CD4-positive, alpha-beta T cell (primary cell): ENCODE measurements at regions of chr11 and their contacts with region 1.

Region 1: GRCh38 chr11:44936525-44936924 is 14.2 kb downstream of the TP53I11 start:
- DNase-seq: peak; percentile 66 to 90 (median 82)
- ATAC-seq: peak; percentile 90
- H3K4me3 ChIP-seq: no peak overlapping the region
- H3K4me3 Mint-ChIP-seq: no peak overlapping the region
- H3K27ac ChIP-seq: no peak overlapping the region
- H3K27ac Mint-ChIP-seq: no peak overlapping the region
- H3K4me1 ChIP-seq: peaks cover 5% of the 10 kb centered on the region
- H3K4me1 Mint-ChIP-seq: no peaks in the 10 kb centered on the region
- H3K27me3 ChIP-seq: no peaks in the 10 kb centered on the region
- H3K27me3 Mint-ChIP-seq: no peaks in the 10 kb centered on the region
- CTCF ChIP-seq: peak; percentile 87

Region 2: GRCh38 chr11:44638032-44638431 is 298.5 kb before region 1 on chr11:
- CTCF ChIA-PET with region 1: no interaction called
- POLR2A ChIA-PET with region 1: no interaction called
- intact Hi-C with region 1: no loop called
- DNase-seq: no peak
- ATAC-seq: no peak
- H3K4me3 ChIP-seq: no peak overlapping the region
- H3K4me3 Mint-ChIP-seq: no peak overlapping the region
- H3K27ac ChIP-seq: no peak overlapping the region
- H3K27ac Mint-ChIP-seq: no peak overlapping the region
- H3K4me1 ChIP-seq: no peaks in the 10 kb centered on the region
- H3K4me1 Mint-ChIP-seq: no peaks in the 10 kb centered on the region
- H3K27me3 ChIP-seq: peaks cover 0 to 4% of the 10 kb centered on the region in 2 experiments
- H3K27me3 Mint-ChIP-seq: peaks cover 23% of the 10 kb centered on the region
- CTCF ChIP-seq: no peak

Region 3: GRCh38 chr11:44673688-44674087 is 262.8 kb before region 1 on chr11:
- CTCF ChIA-PET with region 1: no interaction called
- POLR2A ChIA-PET with region 1: no interaction called
- intact Hi-C with region 1: no loop called
- DNase-seq: no peak
- ATAC-seq: no peak
- H3K4me3 ChIP-seq: no peak overlapping the region
- H3K4me3 Mint-ChIP-seq: peak overlapping the region; percentile 28
- H3K27ac ChIP-seq: no peak overlapping the region
- H3K27ac Mint-ChIP-seq: peak overlapping the region; percentile 50
- H3K4me1 ChIP-seq: peaks cover 9% of the 10 kb centered on the region
- H3K4me1 Mint-ChIP-seq: peaks cover 24% of the 10 kb centered on the region
- H3K27me3 ChIP-seq: no peaks in the 10 kb centered on the region
- H3K27me3 Mint-ChIP-seq: no peaks in the 10 kb centered on the region
- CTCF ChIP-seq: no peak

Region 4: DNA sequence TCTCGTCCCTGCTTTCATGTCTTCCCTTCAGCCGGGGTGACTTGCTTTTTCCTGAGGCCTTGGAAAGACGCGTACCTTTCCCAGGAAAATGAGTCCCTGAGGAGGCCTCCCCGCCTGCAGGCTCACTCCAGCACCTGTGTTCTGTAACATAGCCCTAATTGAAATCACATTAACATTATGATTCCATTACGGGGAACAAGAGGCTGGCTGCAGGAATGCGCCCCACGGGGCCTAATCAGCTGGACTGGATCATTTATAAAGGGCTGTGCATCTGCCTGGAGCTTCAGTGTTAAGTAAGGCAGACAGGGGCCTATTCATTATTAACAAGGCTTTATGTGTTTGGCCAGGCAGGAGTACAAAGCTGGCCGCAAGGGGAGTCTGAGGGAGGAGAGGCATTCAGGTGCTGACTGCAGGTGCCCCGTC is 251.7 kb before region 1 on chr11:
- CTCF ChIA-PET with region 1: no interaction called
- POLR2A ChIA-PET with region 1: no interaction called
- intact Hi-C with region 1: no loop called
- DNase-seq: no peak
- ATAC-seq: no peak
- H3K4me3 ChIP-seq: no peak overlapping the region
- H3K4me3 Mint-ChIP-seq: no peak overlapping the region
- H3K27ac ChIP-seq: no peak overlapping the region
- H3K27ac Mint-ChIP-seq: no peak overlapping the region
- H3K4me1 ChIP-seq: peaks cover 55% of the 10 kb centered on the region
- H3K4me1 Mint-ChIP-seq: peaks cover 44% of the 10 kb centered on the region
- H3K27me3 ChIP-seq: no peaks in the 10 kb centered on the region
- H3K27me3 Mint-ChIP-seq: no peaks in the 10 kb centered on the region
- CTCF ChIP-seq: no peak

Region 5: GRCh38 chr11:45294499-45294898 is 358.0 kb after region 1 on chr11:
- CTCF ChIA-PET with region 1: no interaction called
- POLR2A ChIA-PET with region 1: no interaction called
- intact Hi-C with region 1: loop called in 1 of 2 experiments (anchors 5 kb)
- DNase-seq: no peak
- ATAC-seq: no peak
- H3K4me3 ChIP-seq: no peak overlapping the region
- H3K4me3 Mint-ChIP-seq: no peak overlapping the region
- H3K27ac ChIP-seq: no peak overlapping the region
- H3K27ac Mint-ChIP-seq: no peak overlapping the region
- H3K4me1 ChIP-seq: no peaks in the 10 kb centered on the region
- H3K4me1 Mint-ChIP-seq: no peaks in the 10 kb centered on the region
- H3K27me3 ChIP-seq: peaks cover 7 to 29% of the 10 kb centered on the region in 2 experiments
- H3K27me3 Mint-ChIP-seq: peaks cover 56% of the 10 kb centered on the region
- CTCF ChIP-seq: no peak

Region 6: GRCh38 chr11:45332276-45332934 is 395.9 kb after region 1 on chr11:
- CTCF ChIA-PET with region 1: no interaction called
- POLR2A ChIA-PET with region 1: no interaction called
- intact Hi-C with region 1: loop called (anchors 2 to 5 kb)
- DNase-seq: peak in 10 of 14 experiments; percentile 14 to 72 (median 34)
- ATAC-seq: peak; percentile 58
- H3K4me3 ChIP-seq: no peak overlapping the region
- H3K4me3 Mint-ChIP-seq: no peak overlapping the region
- H3K27ac ChIP-seq: no peak overlapping the region
- H3K27ac Mint-ChIP-seq: no peak overlapping the region
- H3K4me1 ChIP-seq: peaks cover 3% of the 10 kb centered on the region
- H3K4me1 Mint-ChIP-seq: no peaks in the 10 kb centered on the region
- H3K27me3 ChIP-seq: no peaks in the 10 kb centered on the region
- H3K27me3 Mint-ChIP-seq: peaks cover 13% of the 10 kb centered on the region
- CTCF ChIP-seq: peak; percentile 93